Right ventricle myocardium superior (tissue), 1 donor: ENCODE measurements at regions of chr4 and their contacts with region 1.

Region 1: DNA sequence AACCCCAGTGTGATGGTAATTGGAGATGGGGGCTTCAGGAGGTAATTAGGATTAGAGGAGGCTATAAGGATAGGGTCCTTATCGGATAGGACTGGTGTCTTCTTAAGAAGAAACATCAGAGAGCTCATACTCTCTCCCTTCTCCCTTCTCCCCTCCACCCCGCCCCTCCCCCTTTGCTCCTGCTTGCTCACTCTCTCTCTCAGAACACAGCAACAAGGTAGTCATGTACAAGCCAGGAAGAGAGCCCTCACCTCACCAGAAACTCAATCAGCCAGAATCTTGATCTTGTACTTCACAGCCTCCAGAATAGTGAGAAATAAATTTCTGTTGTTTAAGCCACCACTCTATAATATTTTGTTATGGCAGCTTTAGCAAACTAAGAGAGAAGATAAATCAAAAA is 4.5 kb downstream of the DDX60L start:
- DNase-seq: no peak
- ATAC-seq: no peak

Region 2: GRCh38 chr4:168415911-168416310 is 59.8 kb before region 1 on chr4:
- intact Hi-C with region 1: loop called (anchors 2 kb)
- DNase-seq: no peak
- ATAC-seq: no peak